Mammary epithelial cell (primary cell): ENCODE measurements at regions of chr7 and their contacts with region 1.

Region 1: DNA sequence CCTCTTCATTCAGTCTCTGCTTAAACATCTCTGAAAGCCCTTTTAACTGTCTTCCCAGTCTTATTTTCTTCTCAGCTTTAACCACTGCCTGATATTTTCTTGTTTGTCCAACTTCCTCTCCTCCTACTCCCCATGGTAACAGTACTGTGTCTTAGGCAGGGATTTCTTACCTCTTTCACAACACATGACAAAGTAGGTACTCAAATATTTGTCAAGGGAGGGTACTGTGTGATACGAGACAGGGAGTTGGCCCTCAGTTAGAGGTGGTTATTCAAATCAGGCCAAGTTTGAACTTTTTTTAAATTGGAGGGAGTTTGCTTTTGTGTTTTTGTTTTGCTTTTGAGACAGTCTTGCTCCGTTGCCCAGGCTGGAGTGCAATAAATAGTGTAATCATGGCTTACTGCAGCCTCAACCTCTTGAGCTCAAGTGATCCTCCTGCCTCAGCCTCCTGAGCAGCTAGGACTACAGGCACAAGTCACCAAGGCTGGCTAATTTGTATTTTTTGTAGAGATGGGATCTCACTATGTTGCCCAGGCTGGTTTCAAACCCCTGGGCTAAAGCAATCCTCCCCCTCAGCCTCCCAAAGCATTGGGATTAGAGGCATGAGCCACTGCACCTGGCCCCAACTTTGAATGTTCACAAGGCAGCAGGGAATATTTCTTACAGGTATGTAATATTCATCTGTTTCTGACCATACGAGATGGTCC is 2.5 kb upstream of the KPNA7 start:
- DNase-seq: peak; percentile 93
- H3K4me3 ChIP-seq: no peak overlapping the region
- H3K27ac ChIP-seq: peak overlapping the region; percentile 90
- H3K4me1 ChIP-seq: peaks cover 26% of the 10 kb centered on the region
- H3K27me3 ChIP-seq: no peaks in the 10 kb centered on the region
- CTCF ChIP-seq: no peak

Region 2: GRCh38 chr7:99190359-99191032 is 19.9 kb before region 1 on chr7:
- CTCF ChIA-PET with region 1: interaction called, 11 read pairs
- dilution Hi-C with region 1: no loop called
- in situ Hi-C with region 1: no loop called
- intact Hi-C with region 1: no loop called
- DNase-seq: no peak
- H3K4me3 ChIP-seq: no peak overlapping the region
- H3K27ac ChIP-seq: no peak overlapping the region
- H3K4me1 ChIP-seq: peaks cover 16% of the 10 kb centered on the region
- H3K27me3 ChIP-seq: no peaks in the 10 kb centered on the region
- CTCF ChIP-seq: no peak

Region 3: DNA sequence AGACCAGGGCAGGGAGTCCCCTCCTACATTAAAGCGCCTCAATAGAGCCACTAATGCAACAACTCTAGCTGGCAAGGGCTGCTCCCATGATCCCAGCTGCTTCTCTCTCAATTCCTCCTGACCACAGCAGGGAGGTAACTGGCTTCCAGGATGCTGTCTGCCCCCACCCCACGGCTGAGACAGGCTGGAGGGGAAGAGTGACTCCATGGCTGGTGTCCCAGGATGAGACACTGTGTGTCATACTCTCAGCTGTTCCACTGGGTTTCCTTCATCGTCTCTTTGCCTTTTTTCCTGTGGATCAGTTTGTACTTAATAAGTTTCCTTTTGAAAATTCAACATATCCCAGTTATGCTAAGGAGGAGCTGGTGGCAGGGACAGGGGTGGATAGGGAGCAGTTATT is 34.5 kb after region 1 on chr7:
- CTCF ChIA-PET with region 1: no interaction called
- dilution Hi-C with region 1: loop called (anchors 5 kb)
- in situ Hi-C with region 1: no loop called
- intact Hi-C with region 1: no loop called
- DNase-seq: peak; percentile 86
- H3K4me3 ChIP-seq: no peak overlapping the region
- H3K27ac ChIP-seq: peak overlapping the region; percentile 57
- H3K4me1 ChIP-seq: peaks cover 22% of the 10 kb centered on the region
- H3K27me3 ChIP-seq: no peaks in the 10 kb centered on the region
- CTCF ChIP-seq: no peak

Region 4: GRCh38 chr7:100119062-100119700 is 908.8 kb after region 1 on chr7 and contains the starts of genes CNPY4 and TAF6:
- CTCF ChIA-PET with region 1: no interaction called
- dilution Hi-C with region 1: no loop called
- in situ Hi-C with region 1: no loop called
- intact Hi-C with region 1: no loop called
- DNase-seq: peak; percentile 92
- H3K4me3 ChIP-seq: peak within 1 kb of the TSS; percentile 90 to 98 (median 97)
- H3K27ac ChIP-seq: peak within 1 kb of the TSS; percentile 89
- H3K4me1 ChIP-seq: peaks cover 8% of the 10 kb centered on the region
- H3K27me3 ChIP-seq: no peaks in the 10 kb centered on the region
- CTCF ChIP-seq: peak in 1 of 2 donors; percentile 16
- total RNA-seq, gene CNPY4: 6.9 to 7.5 TPM
- total RNA-seq, gene TAF6: 28.8 to 55.3 TPM